H1 (cell line): ENCODE measurements at regions of chr16 and their contacts with region 1.

Region 1: GRCh38 chr16:87778830-87779579 is 13.2 kb upstream of the KLHDC4 start:
- DNase-seq: peak; percentile 95 to 99
- H3K4me3 ChIP-seq: no peak overlapping the region
- H3K27ac ChIP-seq: peak overlapping the region; percentile 89
- H3K4me1 ChIP-seq: peaks cover 0 to 8% (median 6%) of the 10 kb centered on the region in 4 experiments; a peak in 5 of 7 replicates
- H3K27me3 ChIP-seq: no peaks in the 10 kb centered on the region
- CTCF ChIP-seq: peak; percentile 93 to 98 (median 97)
- EP300 ChIP-seq: peak in 1 of 2 experiments; percentile 92; a peak in 1 of 3 replicates
- POLR2A ChIP-seq: peak; percentile 47 to 75
- RAD21 ChIP-seq: peak; percentile 99 to 100

Region 2: GRCh38 chr16:87806603-87807546 is 27.9 kb after region 1 on chr16:
- CTCF ChIA-PET with region 1: interaction called, 37 read pairs
- POLR2A ChIA-PET with region 1: interaction called, 27 read pairs
- DNase-seq: peak in 1 of 2 experiments; percentile 61
- H3K4me3 ChIP-seq: no peak overlapping the region
- H3K27ac ChIP-seq: no peak overlapping the region
- H3K4me1 ChIP-seq: peaks cover 0 to 14% (median 0%) of the 10 kb centered on the region in 4 experiments; a peak in 2 of 7 replicates
- H3K27me3 ChIP-seq: no peaks in the 10 kb centered on the region
- CTCF ChIP-seq: no peak
- EP300 ChIP-seq: no peak
- POLR2A ChIP-seq: no peak
- RAD21 ChIP-seq: no peak

Region 3: DNA sequence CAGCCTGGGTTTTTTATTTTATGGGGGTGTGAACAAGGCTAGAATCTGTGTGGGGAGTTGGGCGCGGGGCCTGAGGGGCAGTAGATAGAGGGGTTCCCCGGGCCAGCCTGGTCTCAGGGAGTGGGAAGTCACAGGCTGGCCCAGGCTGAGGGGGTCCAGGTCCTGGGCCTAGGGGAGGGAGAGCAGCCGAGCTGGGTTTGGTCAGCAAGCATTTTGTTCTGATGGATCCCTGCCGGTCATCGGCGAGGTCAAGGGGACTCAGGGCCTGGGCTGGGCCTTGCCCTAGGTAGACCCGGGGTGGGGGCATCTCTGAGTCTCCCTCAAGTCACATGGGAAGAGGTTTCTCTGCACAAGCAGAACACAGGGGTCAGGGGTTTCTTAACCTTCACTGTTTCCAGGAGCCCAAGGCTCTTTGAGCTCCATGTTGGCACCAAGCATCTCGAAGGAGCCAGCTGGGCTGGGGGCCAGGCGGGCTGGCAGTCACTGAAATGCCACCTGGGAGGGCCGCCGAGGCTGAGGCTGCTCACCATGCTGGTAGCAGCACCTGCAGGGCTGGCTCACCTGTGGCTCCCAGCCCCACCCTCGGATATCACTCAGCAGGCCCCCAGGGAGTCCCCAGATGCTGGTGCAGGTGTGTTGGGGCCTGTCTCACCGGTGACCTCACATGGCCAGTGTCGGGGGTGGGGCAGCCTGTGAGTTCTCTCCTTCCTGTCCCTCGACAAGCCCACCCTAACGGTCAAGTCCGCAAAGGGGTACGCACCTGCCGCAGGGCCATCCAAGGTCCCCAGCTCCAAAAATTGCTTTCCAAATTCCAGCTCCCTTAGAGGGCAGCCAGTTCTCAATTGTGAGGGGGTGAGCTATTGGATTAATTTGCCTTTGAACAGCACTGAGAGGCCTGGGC is 49.3 kb after region 1 on chr16:
- CTCF ChIA-PET with region 1: interaction called, 74 read pairs
- POLR2A ChIA-PET with region 1: interaction called, 117 read pairs
- DNase-seq: no peak
- H3K4me3 ChIP-seq: no peak overlapping the region
- H3K27ac ChIP-seq: no peak overlapping the region; the same call in 1 of the 2 replicates
- H3K4me1 ChIP-seq: peaks cover 6 to 47% (median 33%) of the 10 kb centered on the region in 4 experiments
- H3K27me3 ChIP-seq: no peaks in the 10 kb centered on the region
- CTCF ChIP-seq: no peak
- EP300 ChIP-seq: no peak
- POLR2A ChIP-seq: no peak
- RAD21 ChIP-seq: no peak

Region 4: GRCh38 chr16:87853411-87854052 is 74.5 kb after region 1 on chr16:
- CTCF ChIA-PET with region 1: interaction called, 120 read pairs
- POLR2A ChIA-PET with region 1: interaction called, 18 read pairs
- DNase-seq: peak; percentile 65 to 92
- H3K4me3 ChIP-seq: peak overlapping the region in 1 of 4 experiments; percentile 14; a peak in 1 of 8 replicates
- H3K27ac ChIP-seq: peak overlapping the region; percentile 48; the same call in 1 of the 2 replicates
- H3K4me1 ChIP-seq: peaks cover 16 to 46% (median 33%) of the 10 kb centered on the region in 4 experiments
- H3K27me3 ChIP-seq: no peaks in the 10 kb centered on the region
- CTCF ChIP-seq: no peak
- EP300 ChIP-seq: no peak
- POLR2A ChIP-seq: peak in 1 of 2 experiments; percentile 47; a peak in 1 of 3 replicates
- RAD21 ChIP-seq: no peak

Region 5: DNA sequence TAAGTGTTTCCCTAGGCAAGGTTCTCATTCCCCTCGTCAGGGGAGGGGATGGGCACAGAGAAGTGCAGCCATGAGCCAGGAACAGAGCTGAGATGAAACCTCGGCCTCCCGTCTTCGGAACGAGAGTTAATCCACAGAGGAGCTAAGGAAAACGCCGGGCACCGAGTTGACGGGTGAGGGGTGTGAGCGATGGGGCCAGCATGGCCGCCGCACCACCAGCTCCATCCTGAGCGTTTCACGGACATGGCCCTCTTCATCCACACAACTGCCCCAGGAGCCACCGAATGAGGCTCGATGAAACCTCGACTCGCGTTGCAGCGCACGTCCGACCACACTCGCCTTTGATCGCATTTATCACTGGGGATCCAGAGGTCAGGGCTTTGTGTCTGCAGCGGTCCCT is 135.8 kb after region 1 on chr16:
- CTCF ChIA-PET with region 1: interaction called, 21 read pairs
- POLR2A ChIA-PET with region 1: interaction called, 3 read pairs
- DNase-seq: no peak
- H3K4me3 ChIP-seq: no peak overlapping the region
- H3K27ac ChIP-seq: no peak overlapping the region
- H3K4me1 ChIP-seq: peaks cover 0 to 2% (median 0%) of the 10 kb centered on the region in 4 experiments; a peak in 2 of 7 replicates
- H3K27me3 ChIP-seq: no peaks in the 10 kb centered on the region
- CTCF ChIP-seq: no peak
- EP300 ChIP-seq: no peak
- POLR2A ChIP-seq: no peak
- RAD21 ChIP-seq: no peak

Region 6: GRCh38 chr16:88022076-88023062 is 243.4 kb after region 1 on chr16:
- CTCF ChIA-PET with region 1: no interaction called
- POLR2A ChIA-PET with region 1: no interaction called
- DNase-seq: no peak
- H3K4me3 ChIP-seq: no peak overlapping the region
- H3K27ac ChIP-seq: no peak overlapping the region
- H3K4me1 ChIP-seq: peaks cover 0 to 6% (median 2%) of the 10 kb centered on the region in 4 experiments; a peak in 3 of 7 replicates
- H3K27me3 ChIP-seq: no peaks in the 10 kb centered on the region
- CTCF ChIP-seq: no peak
- EP300 ChIP-seq: no peak
- POLR2A ChIP-seq: no peak
- RAD21 ChIP-seq: peak in 1 of 2 experiments; percentile 19; a peak in 1 of 4 replicates